ENCODE measurements at regions of chr19 and their contacts with region 1.

Region 1: GRCh38 chr19:16829010-16829821 is at the start of gene SIN3B:
- DNase-seq: peak; percentile 84 to 94 (median 89)
- ATAC-seq: peak; percentile 97
- H3K4me3 ChIP-seq: peak within 1 kb of the TSS; percentile 67
- H3K4me3 Mint-ChIP-seq: peak within 1 kb of the TSS; percentile 77 to 90 (median 86)
- H3K27ac ChIP-seq: peak within 1 kb of the TSS; percentile 93
- H3K27ac Mint-ChIP-seq: peak within 1 kb of the TSS; percentile 56 to 95 (median 89)
- H3K4me1 ChIP-seq: peaks cover 8% of the 10 kb centered on the region in 2 donors
- H3K4me1 Mint-ChIP-seq: peaks cover 16 to 54% (median 42%) of the 10 kb centered on the region in 7 donors
- H3K27me3 ChIP-seq: no peaks in the 10 kb centered on the region
- H3K27me3 Mint-ChIP-seq: peaks cover 11 to 27% (median 21%) of the 10 kb centered on the region in 5 donors
- total RNA-seq, gene SIN3B: 42.7 to 105 (median 102) TPM

Region 2: GRCh38 chr19:16897154-16897855 is 68.1 kb after region 1 on chr19:
- CTCF ChIA-PET with region 1: no interaction called
- POLR2A ChIA-PET with region 1: no interaction called
- intact Hi-C with region 1: loop called in 1 of 2 experiments (anchors 5 kb)
- DNase-seq: peak in 7 of 9 donors; percentile 9 to 77 (median 32)
- ATAC-seq: peak; percentile 80
- H3K4me3 ChIP-seq: peak overlapping the region; percentile 50
- H3K4me3 Mint-ChIP-seq: peak overlapping the region in 9 of 10 donors; percentile 43 to 81 (median 76)
- H3K27ac ChIP-seq: no peak overlapping the region
- H3K27ac Mint-ChIP-seq: peak overlapping the region in 2 of 9 donors; percentile 47 to 77
- H3K4me1 ChIP-seq: peaks cover 0 to 5% of the 10 kb centered on the region in 2 donors
- H3K4me1 Mint-ChIP-seq: peaks cover 13 to 36% (median 22%) of the 10 kb centered on the region in 7 donors
- H3K27me3 ChIP-seq: no peaks in the 10 kb centered on the region
- H3K27me3 Mint-ChIP-seq: peaks cover 6 to 50% (median 19%) of the 10 kb centered on the region in 5 donors

Measured in naive thymus-derived CD4-positive, alpha-beta T cell (primary cell).